ENCODE measurements at regions of chr7 and their contacts with region 1.

Region 1: GRCh38 chr7:47179812-47180515 is 401.9 kb downstream of the TNS3 start:
- DNase-seq: peak; percentile 24
- H3K4me3 ChIP-seq: no peak overlapping the region
- CTCF ChIP-seq: peak; percentile 74

Region 2: GRCh38 chr7:47195641-47196040 is 15.7 kb after region 1 on chr7:
- CTCF ChIA-PET with region 1: interaction called, 12 read pairs
- POLR2A ChIA-PET with region 1: no interaction called
- DNase-seq: no peak
- H3K4me3 ChIP-seq: no peak overlapping the region
- CTCF ChIP-seq: no peak

Region 3: DNA sequence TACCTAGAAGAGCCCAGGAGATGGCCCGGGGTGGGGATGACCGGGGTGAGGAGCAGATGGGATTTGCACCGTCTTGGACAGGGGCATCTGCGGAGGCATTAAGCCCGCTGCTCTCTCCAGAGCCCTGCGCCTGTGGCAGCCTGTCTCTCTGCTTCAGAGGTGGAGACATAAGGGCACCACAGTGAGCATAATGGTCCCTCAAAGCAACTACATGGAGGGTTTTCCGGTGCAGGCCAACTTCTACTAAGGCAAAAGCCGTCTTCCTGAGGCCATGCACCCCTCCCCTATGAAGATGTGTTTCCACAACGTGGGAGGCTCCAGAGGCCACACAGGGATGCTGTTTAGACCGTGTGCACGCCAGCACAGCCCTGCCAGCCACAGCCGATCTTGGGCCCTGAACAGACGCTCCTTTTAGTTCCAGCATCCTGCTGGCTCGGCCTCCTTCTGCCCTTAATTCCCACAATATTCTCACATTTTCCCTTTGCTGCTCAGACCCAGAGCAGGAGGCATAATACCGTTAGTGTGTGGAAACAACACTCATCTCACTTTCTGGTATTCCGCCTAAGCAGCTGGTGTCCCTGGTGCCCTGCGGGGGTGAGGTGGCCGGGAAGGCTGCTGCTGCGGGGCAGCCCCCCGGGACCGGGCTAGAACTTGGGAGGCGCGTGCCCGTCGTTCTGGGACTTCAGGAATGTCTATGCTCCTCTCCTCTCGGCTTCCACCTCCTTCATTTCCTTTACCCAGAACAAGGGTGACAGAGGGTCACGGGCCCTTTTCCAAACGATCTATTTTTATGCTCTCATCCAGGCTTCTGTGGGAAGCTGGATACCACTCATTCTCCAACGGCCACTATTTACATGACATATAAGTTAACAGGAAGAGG is 135.0 kb after region 1 on chr7:
- CTCF ChIA-PET with region 1: no interaction called
- POLR2A ChIA-PET with region 1: no interaction called
- DNase-seq: no peak
- H3K4me3 ChIP-seq: no peak overlapping the region; the same call in 1 of the 2 replicates
- CTCF ChIP-seq: no peak